ENCODE measurements at regions of chr11 and their contacts with region 1.

Region 1: DNA sequence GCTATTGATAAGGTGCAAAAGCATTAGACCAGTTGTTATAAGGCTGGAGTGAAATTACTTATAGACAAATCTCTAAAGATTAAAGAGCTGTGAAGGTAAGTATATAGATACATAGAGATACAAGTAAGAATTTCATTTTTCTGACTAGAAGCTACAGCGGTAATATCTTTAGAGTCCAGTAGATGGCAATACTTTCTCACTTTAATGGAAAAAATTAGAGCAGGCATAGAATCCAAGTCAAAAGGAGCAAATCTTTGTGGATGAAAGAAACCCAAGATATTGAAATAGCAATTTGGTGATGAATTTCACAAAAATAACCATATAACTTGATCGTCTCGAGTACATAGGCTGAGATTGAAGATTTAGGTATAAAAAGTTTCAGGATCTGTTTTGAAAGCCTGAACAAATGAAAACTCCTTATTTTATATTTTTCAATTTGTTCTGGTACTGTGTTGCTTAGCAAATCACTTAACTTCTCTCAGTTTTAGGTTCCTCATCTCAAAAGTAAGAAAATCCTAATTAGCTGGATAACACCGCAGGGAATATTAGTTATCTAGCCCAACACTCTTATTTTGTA is 81.9 kb downstream of the UVRAG start:
- DNase-seq: no peak
- H3K4me3 ChIP-seq: no peak overlapping the region
- H3K27ac ChIP-seq: no peak overlapping the region
- H3K4me1 ChIP-seq: no peaks in the 10 kb centered on the region
- H3K27me3 ChIP-seq: no peaks in the 10 kb centered on the region
- CTCF ChIP-seq: peak; percentile 49 to 74 (median 50)
- POLR2A ChIP-seq: no peak

Region 2: GRCh38 chr11:76120513-76121101 is 223.7 kb after region 1 on chr11:
- intact Hi-C with region 1: no loop called
- DNase-seq: no peak
- H3K4me3 ChIP-seq: no peak overlapping the region
- H3K27ac ChIP-seq: no peak overlapping the region
- H3K4me1 ChIP-seq: peaks cover 16% of the 10 kb centered on the region
- H3K27me3 ChIP-seq: no peaks in the 10 kb centered on the region
- CTCF ChIP-seq: no peak
- POLR2A ChIP-seq: no peak

Region 3: GRCh38 chr11:76152086-76152681 is 255.3 kb after region 1 on chr11:
- intact Hi-C with region 1: loop called (anchors 10 kb)
- DNase-seq: peak; percentile 93
- H3K4me3 ChIP-seq: peak overlapping the region; percentile 40 to 58
- H3K27ac ChIP-seq: no peak overlapping the region
- H3K4me1 ChIP-seq: peaks cover 11% of the 10 kb centered on the region
- H3K27me3 ChIP-seq: no peaks in the 10 kb centered on the region
- CTCF ChIP-seq: peak; percentile 90 to 93 (median 92)
- POLR2A ChIP-seq: no peak